Heart left ventricle (tissue), 16 donors: ENCODE measurements at regions of chr5 and their contacts with region 1.

Region 1: GRCh38 chr5:112860929-112861637 is at the start of gene SRP19:
- DNase-seq: peak; percentile 95 to 97 (median 96)
- ATAC-seq: peak; percentile 95 to 98 (median 96)
- H3K4me3 ChIP-seq: peak within 1 kb of the TSS; percentile 71 to 98 (median 84)
- H3K27ac ChIP-seq: peak within 1 kb of the TSS; percentile 63 to 89 (median 82)
- H3K4me1 ChIP-seq: peaks cover 0 to 35% (median 26%) of the 10 kb centered on the region in 12 donors
- H3K27me3 ChIP-seq: no peaks in the 10 kb centered on the region
- CTCF ChIP-seq: no peak
- POLR2A ChIP-seq: peak in 1 of 2 donors; percentile 78
- total RNA-seq, gene SRP19: 23.6 to 45.7 (median 28.2) TPM

Region 2: DNA sequence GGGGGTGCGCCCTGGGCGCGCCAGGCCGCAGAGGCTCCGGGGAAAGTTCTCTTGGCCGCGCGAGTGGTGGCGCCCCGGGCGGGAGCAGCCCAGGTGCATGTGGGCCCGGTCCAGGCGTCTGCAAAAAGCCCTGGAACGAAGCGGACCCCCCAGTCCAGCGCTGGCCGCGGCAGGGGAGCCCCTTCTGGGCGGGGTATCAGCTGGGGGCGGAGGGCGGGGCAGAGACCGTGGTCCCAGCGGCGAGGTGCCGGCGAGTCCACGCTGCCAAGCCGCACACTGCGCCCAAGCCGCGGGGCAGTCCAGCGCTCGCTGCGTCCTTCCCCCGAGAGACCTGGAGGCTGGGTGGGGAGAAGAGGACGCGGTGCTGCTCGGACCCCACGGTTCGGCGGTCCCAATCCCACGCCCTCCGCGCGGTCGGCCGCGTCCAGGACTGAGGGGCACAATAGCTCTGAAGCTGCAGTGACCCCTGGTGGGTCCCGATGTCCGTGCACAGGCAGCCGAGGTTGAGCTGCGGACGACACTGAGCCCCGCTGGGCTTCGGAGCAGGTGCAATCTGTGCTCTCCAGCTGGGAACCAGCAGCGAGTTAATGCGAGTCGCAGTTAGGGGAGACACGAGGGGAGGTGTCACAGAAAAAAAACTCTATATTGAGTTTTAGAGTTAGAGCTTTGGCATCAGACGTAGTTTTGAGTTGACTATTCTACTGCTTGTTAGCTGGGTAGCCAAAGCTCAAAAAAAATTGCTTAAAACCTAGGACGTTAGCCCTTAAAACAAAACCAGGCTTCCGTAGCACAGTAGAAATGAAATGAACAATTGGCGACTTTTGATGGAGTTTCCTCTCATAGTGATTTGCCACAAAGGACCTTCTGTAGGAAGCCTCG is 440.9 kb before region 1 on chr5:
- intact Hi-C with region 1: no loop called
- DNase-seq: peak; percentile 87 to 92 (median 88)
- ATAC-seq: peak; percentile 92 to 95 (median 92)
- H3K4me3 ChIP-seq: peak overlapping the region; percentile 63 to 97 (median 88)
- H3K27ac ChIP-seq: peak overlapping the region; percentile 72 to 95 (median 92)
- H3K4me1 ChIP-seq: peaks cover 0 to 31% (median 16%) of the 10 kb centered on the region in 12 donors
- H3K27me3 ChIP-seq: peaks cover 0 to 25% (median 0%) of the 10 kb centered on the region in 9 donors
- CTCF ChIP-seq: peak; percentile 81 to 98 (median 93)
- POLR2A ChIP-seq: no peak

Region 3: GRCh38 chr5:112691758-112692157 is 169.3 kb before region 1 on chr5:
- intact Hi-C with region 1: no loop called
- DNase-seq: no peak
- ATAC-seq: peak in 1 of 4 donors; percentile 41
- H3K4me3 ChIP-seq: no peak overlapping the region
- H3K27ac ChIP-seq: no peak overlapping the region
- H3K4me1 ChIP-seq: peaks cover 0 to 3% (median 0%) of the 10 kb centered on the region in 12 donors
- H3K27me3 ChIP-seq: no peaks in the 10 kb centered on the region
- CTCF ChIP-seq: peak in 7 of 12 donors; percentile 3 to 48 (median 19)
- POLR2A ChIP-seq: no peak

Region 4: DNA sequence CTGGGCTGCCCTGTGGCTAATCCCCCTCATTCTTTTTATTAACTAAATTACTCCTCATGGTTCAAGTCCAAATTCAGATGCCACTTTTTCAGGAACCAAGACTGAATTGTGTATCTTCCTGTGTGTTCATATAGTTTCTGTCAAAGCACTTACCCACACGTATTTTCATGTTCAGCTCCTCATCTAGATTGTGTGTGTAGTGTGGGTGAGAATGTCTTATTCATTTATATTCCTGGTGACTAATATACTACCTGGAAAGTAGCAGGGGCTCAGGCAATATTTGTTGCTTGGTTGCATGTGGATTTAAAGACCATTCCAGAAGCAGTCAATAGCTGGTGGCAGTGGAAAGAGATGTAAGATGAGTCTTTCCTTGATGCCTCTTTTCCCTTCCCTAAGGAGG is 48.5 kb before region 1 on chr5:
- intact Hi-C with region 1: no loop called
- DNase-seq: no peak
- ATAC-seq: no peak
- H3K4me3 ChIP-seq: no peak overlapping the region
- H3K27ac ChIP-seq: no peak overlapping the region
- H3K4me1 ChIP-seq: peaks cover 0 to 9% (median 0%) of the 10 kb centered on the region in 12 donors
- H3K27me3 ChIP-seq: no peaks in the 10 kb centered on the region
- CTCF ChIP-seq: no peak
- POLR2A ChIP-seq: no peak

Region 5: DNA sequence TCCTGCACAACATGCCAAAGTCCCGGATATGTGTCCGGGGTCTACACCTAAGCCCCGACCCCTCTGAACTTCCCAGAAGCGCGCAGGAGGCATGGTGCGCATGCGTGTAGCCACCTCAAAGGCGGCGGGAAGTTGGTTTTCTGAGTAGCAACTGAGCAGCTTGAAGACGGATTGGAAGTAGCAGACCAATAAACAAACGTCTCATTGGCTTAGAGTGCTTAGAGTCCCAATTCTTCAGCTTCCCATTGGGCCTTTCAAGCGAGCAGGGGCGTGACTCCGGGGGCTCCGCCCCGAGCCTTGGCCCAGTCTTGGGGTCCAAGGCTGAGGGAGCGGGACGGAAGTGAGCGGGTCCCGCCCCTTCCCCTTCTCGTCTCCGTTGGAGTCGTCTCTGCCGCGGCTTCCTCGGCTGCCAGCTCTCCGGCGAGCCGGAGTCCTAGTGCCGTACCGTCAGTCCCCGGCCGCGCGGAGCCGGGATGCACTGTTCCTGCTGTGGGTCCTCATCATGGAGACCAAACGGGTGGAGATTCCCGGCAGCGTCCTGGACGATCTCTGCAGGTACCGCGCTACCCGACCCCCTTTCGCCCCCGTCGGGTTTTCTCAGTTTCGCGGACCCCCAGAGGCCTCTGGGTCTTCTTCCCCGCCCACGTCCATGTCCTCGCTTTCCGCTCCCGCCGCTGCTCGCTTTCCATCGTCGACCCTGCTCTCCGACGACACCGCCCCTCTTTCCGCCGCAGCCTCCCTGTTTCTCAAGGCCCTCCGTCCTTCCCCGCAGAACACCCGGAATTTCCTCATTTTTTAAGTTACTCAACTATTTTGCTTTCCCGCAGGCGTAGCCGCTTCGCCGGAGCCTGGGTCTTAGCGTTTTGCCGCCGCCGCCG is 115.6 kb after region 1 on chr5 and contains the start of gene DCP2:
- intact Hi-C with region 1: loop called in 2 of 10 experiments (anchors 5 kb)
- DNase-seq: peak; percentile 95 to 97 (median 96)
- ATAC-seq: peak; percentile 99
- H3K4me3 ChIP-seq: peak within 1 kb of the TSS; percentile 36 to 95 (median 90)
- H3K27ac ChIP-seq: peak within 1 kb of the TSS; percentile 82 to 95 (median 92)
- H3K4me1 ChIP-seq: peaks cover 0 to 42% (median 31%) of the 10 kb centered on the region in 12 donors
- H3K27me3 ChIP-seq: no peaks in the 10 kb centered on the region
- CTCF ChIP-seq: no peak
- POLR2A ChIP-seq: peak in 1 of 2 donors; percentile 77
- total RNA-seq, gene DCP2: 8.3 to 36.0 (median 18.4) TPM